ENCODE measurements at regions of chr3 and their contacts with region 1.

Region 1: DNA sequence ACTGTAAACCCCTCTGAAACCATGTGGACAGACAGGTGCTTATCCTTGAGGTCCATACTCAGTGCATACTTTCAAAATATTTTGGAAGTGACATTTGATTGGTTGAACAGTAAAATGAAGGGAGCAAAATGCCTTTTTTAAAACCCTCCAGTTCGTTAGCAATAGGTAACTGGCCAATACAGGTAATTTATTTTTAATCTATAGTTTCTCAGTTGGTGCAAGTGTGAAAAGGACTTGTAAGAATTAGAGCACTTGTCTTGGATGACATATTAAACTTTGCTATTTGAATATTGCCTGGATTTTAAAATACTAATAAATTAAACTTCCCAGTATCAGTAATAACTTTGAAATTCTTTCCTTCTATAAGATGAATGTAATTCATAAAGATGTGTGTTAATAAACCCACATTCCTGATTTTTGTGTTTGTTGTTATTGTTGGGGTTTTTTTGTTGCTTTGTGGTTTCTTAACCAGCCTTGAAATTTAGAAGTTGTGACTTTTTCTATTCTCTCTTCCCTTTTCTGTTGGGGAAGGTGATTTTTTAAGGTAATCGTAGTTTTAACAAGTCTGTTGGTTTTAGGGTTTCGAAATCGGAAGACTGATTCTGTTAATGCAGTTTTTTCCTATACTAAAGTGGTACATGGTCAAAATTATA is 90.0 kb downstream of the STT3B start:
- DNase-seq: no peak
- H3K4me3 ChIP-seq: no peak overlapping the region
- CTCF ChIP-seq: no peak
- POLR2A ChIP-seq: no peak

Region 2: GRCh38 chr3:31610700-31611275 is 12.0 kb before region 1 on chr3:
- intact Hi-C with region 1: loop called (anchors 1 kb)
- DNase-seq: no peak
- H3K4me3 ChIP-seq: no peak overlapping the region
- CTCF ChIP-seq: no peak
- POLR2A ChIP-seq: no peak

Measured in lower leg skin (tissue), 4 donors.